ENCODE measurements at regions of chr1 and their contacts with region 1.

Region 1: GRCh38 chr1:77978969-77979876 is at the start of gene FUBP1:
- DNase-seq: peak; percentile 98
- ATAC-seq: peak; percentile 84
- H3K4me3 Mint-ChIP-seq: no peak within 1 kb of the TSS
- H3K27ac Mint-ChIP-seq: no peak within 1 kb of the TSS
- H3K4me1 Mint-ChIP-seq: peaks cover 45% of the 10 kb centered on the region
- H3K27me3 Mint-ChIP-seq: no peaks in the 10 kb centered on the region
- total RNA-seq, gene FUBP1: 195 to 197 TPM

Region 2: GRCh38 chr1:78649628-78650027 is 670.4 kb after region 1 on chr1 and contains the start of gene IFI44:
- CTCF ChIA-PET with region 1: no interaction called
- POLR2A ChIA-PET with region 1: interaction called, 10 read pairs
- DNase-seq: peak; percentile 82
- ATAC-seq: peak; percentile 92
- H3K4me3 Mint-ChIP-seq: peak within 1 kb of the TSS; percentile 94
- H3K27ac Mint-ChIP-seq: peak within 1 kb of the TSS; percentile 91
- H3K4me1 Mint-ChIP-seq: peaks cover 61% of the 10 kb centered on the region
- H3K27me3 Mint-ChIP-seq: no peaks in the 10 kb centered on the region
- total RNA-seq, gene IFI44: 158 to 165 TPM